Activated naive CD4-positive, alpha-beta T cell treated with anti-CD3 and anti-CD28 coated beads, Interleukin-2, amount 10 ng/mL, durations not matched to agents 7 days and 5 days (primary cell): ENCODE measurements at regions of chr1 and their contacts with region 1.

Region 1: GRCh38 chr1:156480411-156481192 is 20.0 kb downstream of the MEF2D start:
- DNase-seq: peak; percentile 84
- H3K4me3 Mint-ChIP-seq: no peak overlapping the region
- H3K27ac Mint-ChIP-seq: peak overlapping the region; percentile 72
- H3K4me1 Mint-ChIP-seq: peaks cover 30% of the 10 kb centered on the region
- H3K27me3 Mint-ChIP-seq: no peaks in the 10 kb centered on the region

Region 2: GRCh38 chr1:156500797-156501499 is 20.3 kb after region 1 on chr1:
- CTCF ChIA-PET with region 1: interaction called, 150 read pairs
- DNase-seq: peak; percentile 93
- H3K4me3 Mint-ChIP-seq: peak overlapping the region; percentile 89
- H3K27ac Mint-ChIP-seq: peak overlapping the region; percentile 98
- H3K4me1 Mint-ChIP-seq: peaks cover 76% of the 10 kb centered on the region
- H3K27me3 Mint-ChIP-seq: peaks cover 5% of the 10 kb centered on the region

Region 3: DNA sequence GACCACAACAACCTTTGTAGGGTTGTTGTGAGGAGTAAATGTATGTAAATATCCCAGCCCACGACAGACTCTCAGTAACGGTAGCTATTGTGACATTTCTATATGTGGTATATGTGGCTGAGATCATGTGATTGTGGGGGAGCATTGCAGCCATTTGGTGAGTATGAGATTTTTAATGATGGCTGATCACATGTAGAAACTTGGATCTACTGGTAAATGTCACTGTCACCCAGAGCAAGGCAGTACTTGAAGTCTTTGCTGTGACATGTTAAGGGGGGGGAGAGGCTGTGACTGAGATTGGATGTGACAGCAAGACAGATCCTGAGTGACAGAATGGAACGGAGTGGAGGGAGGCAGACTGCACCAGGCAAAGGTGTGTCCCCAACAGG is 43.9 kb after region 1 on chr1:
- CTCF ChIA-PET with region 1: interaction called, 17 read pairs
- DNase-seq: no peak
- H3K4me3 Mint-ChIP-seq: no peak overlapping the region
- H3K27ac Mint-ChIP-seq: peak overlapping the region; percentile 16
- H3K4me1 Mint-ChIP-seq: peaks cover 47% of the 10 kb centered on the region
- H3K27me3 Mint-ChIP-seq: peaks cover 7% of the 10 kb centered on the region

Region 4: DNA sequence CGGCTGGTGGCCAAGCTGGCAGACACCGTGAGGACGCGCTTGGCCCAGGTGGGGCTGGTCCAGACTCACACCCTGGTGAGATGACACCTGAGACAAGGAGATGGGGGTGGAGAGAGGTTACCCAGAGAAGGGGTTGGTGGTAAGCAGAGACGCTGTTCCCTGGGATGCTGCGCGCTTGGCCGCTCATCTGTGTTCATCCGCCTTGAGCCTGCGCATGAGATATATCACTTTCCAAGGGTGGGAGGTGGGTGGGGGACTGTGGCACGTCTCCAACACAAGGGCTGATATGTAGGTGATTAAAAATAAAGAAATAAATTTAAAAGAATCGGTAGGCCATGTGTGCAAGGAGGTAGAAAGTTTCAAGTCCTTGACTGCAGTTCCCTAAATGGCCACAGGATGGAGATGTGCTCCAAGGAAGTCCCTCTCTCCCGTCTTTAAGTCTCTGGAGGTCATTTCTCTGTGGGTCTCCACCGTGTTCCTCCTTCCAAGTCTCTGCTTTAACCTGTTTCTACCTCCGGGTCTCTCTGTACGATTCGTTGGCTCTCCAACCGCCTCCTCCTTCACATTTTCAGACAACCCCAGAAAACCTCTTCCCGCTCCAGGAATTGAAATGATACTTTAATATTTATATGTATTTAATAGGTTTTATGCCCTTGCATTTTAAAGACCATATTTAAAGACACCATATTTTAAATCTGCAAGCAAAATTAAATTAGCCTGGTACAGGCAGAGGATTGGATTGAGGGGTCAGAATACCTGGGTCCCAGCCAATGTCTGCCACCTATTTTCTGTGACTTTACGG is 103.4 kb after region 1 on chr1:
- CTCF ChIA-PET with region 1: interaction called, 15 read pairs
- DNase-seq: peak; percentile 86
- H3K4me3 Mint-ChIP-seq: no peak overlapping the region
- H3K27ac Mint-ChIP-seq: no peak overlapping the region
- H3K4me1 Mint-ChIP-seq: peaks cover 33% of the 10 kb centered on the region
- H3K27me3 Mint-ChIP-seq: peaks cover 9% of the 10 kb centered on the region

Region 5: DNA sequence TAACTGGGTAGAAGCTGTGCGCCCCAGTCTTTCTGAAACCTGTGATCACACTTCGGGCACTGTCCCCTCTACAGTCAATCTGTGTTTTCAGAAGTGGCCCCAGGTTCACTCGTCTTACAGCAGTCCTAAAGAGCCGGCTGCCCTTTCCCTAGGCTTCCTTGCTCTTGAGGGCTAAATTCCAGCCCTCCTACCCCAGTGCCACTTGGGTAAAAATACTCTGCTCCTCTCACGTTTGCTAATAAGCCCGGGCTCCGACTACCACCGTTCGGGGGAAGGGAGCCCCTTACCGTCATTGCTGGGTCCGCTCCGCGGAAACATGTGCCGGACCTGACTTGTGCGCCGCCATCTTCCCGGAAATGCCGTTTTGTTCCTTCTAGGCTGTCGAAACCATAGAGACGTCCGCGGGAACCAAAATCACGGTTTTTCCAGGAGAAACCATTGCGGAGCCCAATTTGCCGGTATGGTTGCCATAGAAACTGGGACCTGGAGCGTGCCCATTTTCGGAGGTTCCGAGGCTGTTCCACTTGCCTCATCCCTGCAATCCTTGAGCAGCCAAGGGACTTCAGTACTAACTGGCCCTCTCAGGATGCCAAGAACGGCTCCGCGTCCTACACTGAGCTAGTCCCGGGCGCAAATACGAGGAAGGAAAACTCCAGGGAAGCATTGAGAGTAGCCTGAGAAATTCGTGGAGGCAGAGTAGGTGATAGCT is 120.7 kb after region 1 on chr1 and contains the start of gene GPATCH4:
- CTCF ChIA-PET with region 1: interaction called, 14 read pairs
- DNase-seq: peak; percentile 89
- H3K4me3 Mint-ChIP-seq: peak within 1 kb of the TSS; percentile 98
- H3K27ac Mint-ChIP-seq: peak within 1 kb of the TSS; percentile 93
- H3K4me1 Mint-ChIP-seq: peaks cover 41% of the 10 kb centered on the region
- H3K27me3 Mint-ChIP-seq: no peaks in the 10 kb centered on the region

Region 6: GRCh38 chr1:156728597-156729462 is 248.2 kb after region 1 on chr1 and contains the start of gene ISG20L2:
- CTCF ChIA-PET with region 1: no interaction called
- DNase-seq: peak; percentile 98
- H3K4me3 Mint-ChIP-seq: no peak within 1 kb of the TSS
- H3K27ac Mint-ChIP-seq: no peak within 1 kb of the TSS
- H3K4me1 Mint-ChIP-seq: peaks cover 28% of the 10 kb centered on the region
- H3K27me3 Mint-ChIP-seq: no peaks in the 10 kb centered on the region